MCF 10A (cell line): ENCODE measurements at regions of chr14 and their contacts with region 1.

Region 1: GRCh38 chr14:22386924-22387775 is 201.9 kb downstream of the DAD1 start:
- DNase-seq: peak; percentile 79
- H3K4me3 Mint-ChIP-seq: no peak overlapping the region
- H3K27ac Mint-ChIP-seq: no peak overlapping the region
- H3K4me1 Mint-ChIP-seq: peaks cover 27% of the 10 kb centered on the region
- H3K27me3 Mint-ChIP-seq: no peaks in the 10 kb centered on the region
- CTCF ChIP-seq: peak; percentile 72

Region 2: GRCh38 chr14:22400655-22401259 is 13.6 kb after region 1 on chr14:
- CTCF ChIA-PET with region 1: interaction called, 29 read pairs
- POLR2A ChIA-PET with region 1: no interaction called
- intact Hi-C with region 1: no loop called
- DNase-seq: no peak
- H3K4me3 Mint-ChIP-seq: no peak overlapping the region
- H3K27ac Mint-ChIP-seq: no peak overlapping the region
- H3K4me1 Mint-ChIP-seq: no peaks in the 10 kb centered on the region
- H3K27me3 Mint-ChIP-seq: peaks cover 55% of the 10 kb centered on the region
- CTCF ChIP-seq: no peak

Region 3: GRCh38 chr14:22420598-22421186 is 33.5 kb after region 1 on chr14:
- CTCF ChIA-PET with region 1: interaction called, 10 read pairs
- POLR2A ChIA-PET with region 1: no interaction called
- intact Hi-C with region 1: no loop called
- DNase-seq: peak; percentile 28
- H3K4me3 Mint-ChIP-seq: no peak overlapping the region
- H3K27ac Mint-ChIP-seq: no peak overlapping the region
- H3K4me1 Mint-ChIP-seq: no peaks in the 10 kb centered on the region
- H3K27me3 Mint-ChIP-seq: peaks cover 11% of the 10 kb centered on the region
- CTCF ChIP-seq: no peak

Region 4: DNA sequence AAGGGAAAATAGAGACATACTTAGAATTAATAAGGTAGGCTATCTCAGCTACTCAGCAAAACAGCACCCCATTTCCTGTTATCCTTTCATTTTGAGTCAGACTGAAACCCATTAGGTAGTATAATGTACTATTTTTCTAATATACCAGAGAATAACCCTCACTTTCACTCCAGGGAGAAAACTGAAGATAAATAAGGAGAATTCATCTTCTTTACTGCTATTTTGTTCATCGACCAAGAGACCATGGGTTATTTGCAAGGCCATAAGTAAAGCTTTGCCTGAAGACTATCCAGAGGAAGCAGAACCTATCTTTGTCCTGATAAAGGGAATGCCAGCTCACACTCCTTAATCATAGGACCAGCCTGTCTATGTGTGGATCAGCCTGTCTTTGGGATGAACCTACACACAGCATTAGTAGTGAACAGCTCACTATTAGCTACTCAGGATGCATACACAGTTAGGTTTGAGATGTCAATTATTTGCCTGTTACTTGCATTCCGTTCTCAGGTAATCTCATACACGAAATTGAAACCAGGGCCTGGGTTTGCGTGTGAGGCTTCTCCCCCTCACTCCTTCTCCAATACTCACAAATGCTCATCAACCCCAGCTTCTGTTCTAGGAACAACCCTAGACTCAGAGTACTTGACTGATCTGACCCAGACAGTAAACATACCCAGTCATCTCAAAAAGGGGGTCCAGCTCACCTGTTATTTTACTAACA is 77.4 kb after region 1 on chr14:
- CTCF ChIA-PET with region 1: interaction called, 233 read pairs
- POLR2A ChIA-PET with region 1: interaction called, 3 read pairs
- intact Hi-C with region 1: no loop called
- DNase-seq: no peak
- H3K4me3 Mint-ChIP-seq: no peak overlapping the region
- H3K27ac Mint-ChIP-seq: no peak overlapping the region
- H3K4me1 Mint-ChIP-seq: peaks cover 4% of the 10 kb centered on the region
- H3K27me3 Mint-ChIP-seq: no peaks in the 10 kb centered on the region
- CTCF ChIP-seq: no peak

Region 5: DNA sequence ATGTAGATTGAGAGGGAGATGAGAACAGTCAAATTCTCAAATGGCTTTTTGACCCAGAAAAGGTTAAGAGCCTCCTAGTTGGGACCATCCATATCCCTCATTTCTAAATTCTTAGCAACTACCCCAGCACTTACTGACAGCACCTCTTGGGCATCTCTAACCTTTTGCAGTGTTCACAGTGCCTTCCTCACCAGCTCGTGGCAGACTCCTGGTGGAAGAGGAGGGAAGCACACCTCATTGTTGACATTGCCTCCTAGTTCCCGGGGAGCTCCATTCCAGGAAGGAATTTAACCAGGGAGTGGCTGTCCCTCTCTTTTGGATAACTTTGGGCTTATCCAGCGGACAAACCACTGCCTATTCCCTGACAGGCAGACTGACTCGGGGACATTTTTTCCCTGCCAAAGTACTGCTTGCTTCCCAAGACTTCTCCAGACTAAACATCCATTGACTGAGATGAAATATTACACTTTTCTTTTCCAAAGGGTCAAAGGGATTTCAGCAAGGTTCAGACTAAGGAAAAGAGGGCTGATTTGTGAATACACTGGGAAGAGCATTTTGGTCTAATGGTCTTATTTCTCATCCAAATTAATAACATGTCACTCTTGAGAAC is 266.0 kb after region 1 on chr14:
- CTCF ChIA-PET with region 1: interaction called, 4 read pairs
- POLR2A ChIA-PET with region 1: no interaction called
- intact Hi-C with region 1: loop called (anchors 2 kb)
- DNase-seq: peak; percentile 87
- H3K4me3 Mint-ChIP-seq: no peak overlapping the region
- H3K27ac Mint-ChIP-seq: no peak overlapping the region
- H3K4me1 Mint-ChIP-seq: peaks cover 10% of the 10 kb centered on the region
- H3K27me3 Mint-ChIP-seq: no peaks in the 10 kb centered on the region
- CTCF ChIP-seq: peak; percentile 84